ENCODE measurements at regions of chr4 and their contacts with region 1.

Region 1: GRCh38 chr4:81844717-81845116 is 373.0 kb upstream of the RASGEF1B start:
- DNase-seq: peak; percentile 73
- H3K4me3 Mint-ChIP-seq: no peak overlapping the region
- H3K27ac Mint-ChIP-seq: no peak overlapping the region
- H3K4me1 Mint-ChIP-seq: no peaks in the 10 kb centered on the region
- H3K27me3 Mint-ChIP-seq: no peaks in the 10 kb centered on the region

Region 2: DNA sequence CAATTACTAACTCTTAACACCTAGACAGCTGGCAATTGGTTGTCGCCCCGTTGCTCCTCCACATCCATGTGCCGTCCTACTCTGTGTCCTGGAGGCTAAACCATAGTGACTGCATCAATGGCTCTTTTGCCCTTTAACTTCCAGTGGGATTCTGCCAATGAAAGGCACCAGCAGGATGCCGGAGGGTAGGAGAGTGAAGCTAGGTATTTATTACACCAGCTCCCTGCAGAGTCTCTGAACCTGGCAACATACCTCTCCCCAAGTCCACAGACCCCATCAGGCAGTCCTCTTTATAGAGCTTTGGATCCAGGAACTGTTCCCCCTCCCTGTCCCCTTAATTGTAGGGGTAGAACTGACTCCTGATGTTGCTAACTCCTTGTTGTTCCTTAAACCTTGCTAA is 102.3 kb after region 1 on chr4:
- CTCF ChIA-PET with region 1: no interaction called
- POLR2A ChIA-PET with region 1: no interaction called
- DNase-seq: no peak
- H3K4me3 Mint-ChIP-seq: no peak overlapping the region
- H3K27ac Mint-ChIP-seq: no peak overlapping the region
- H3K4me1 Mint-ChIP-seq: no peaks in the 10 kb centered on the region
- H3K27me3 Mint-ChIP-seq: peaks cover 16% of the 10 kb centered on the region

Region 3: GRCh38 chr4:82201805-82202641 is 357.3 kb after region 1 on chr4:
- CTCF ChIA-PET with region 1: interaction called, 10 read pairs
- POLR2A ChIA-PET with region 1: no interaction called
- DNase-seq: peak; percentile 37
- H3K4me3 Mint-ChIP-seq: no peak overlapping the region
- H3K27ac Mint-ChIP-seq: no peak overlapping the region
- H3K4me1 Mint-ChIP-seq: no peaks in the 10 kb centered on the region
- H3K27me3 Mint-ChIP-seq: peaks cover 5% of the 10 kb centered on the region

Region 4: GRCh38 chr4:82320356-82320755 is 475.6 kb after region 1 on chr4:
- CTCF ChIA-PET with region 1: no interaction called
- POLR2A ChIA-PET with region 1: no interaction called
- DNase-seq: no peak
- H3K4me3 Mint-ChIP-seq: no peak overlapping the region
- H3K27ac Mint-ChIP-seq: no peak overlapping the region
- H3K4me1 Mint-ChIP-seq: no peaks in the 10 kb centered on the region
- H3K27me3 Mint-ChIP-seq: peaks cover 16% of the 10 kb centered on the region